Left ventricle myocardium superior (tissue), 1 donor: ENCODE measurements at regions of chr7 and their contacts with region 1.

Region 1: GRCh38 chr7:94289071-94289470 is 105.6 kb upstream of the COL1A2 start:
- DNase-seq: peak; percentile 42
- ATAC-seq: peak; percentile 88

Region 2: GRCh38 chr7:94436018-94436604 is 147.0 kb after region 1 on chr7:
- intact Hi-C with region 1: loop called (anchors 10 kb)
- DNase-seq: peak; percentile 31
- ATAC-seq: peak; percentile 88